ENCODE measurements at regions of chr14 and their contacts with region 1.

Region 1: DNA sequence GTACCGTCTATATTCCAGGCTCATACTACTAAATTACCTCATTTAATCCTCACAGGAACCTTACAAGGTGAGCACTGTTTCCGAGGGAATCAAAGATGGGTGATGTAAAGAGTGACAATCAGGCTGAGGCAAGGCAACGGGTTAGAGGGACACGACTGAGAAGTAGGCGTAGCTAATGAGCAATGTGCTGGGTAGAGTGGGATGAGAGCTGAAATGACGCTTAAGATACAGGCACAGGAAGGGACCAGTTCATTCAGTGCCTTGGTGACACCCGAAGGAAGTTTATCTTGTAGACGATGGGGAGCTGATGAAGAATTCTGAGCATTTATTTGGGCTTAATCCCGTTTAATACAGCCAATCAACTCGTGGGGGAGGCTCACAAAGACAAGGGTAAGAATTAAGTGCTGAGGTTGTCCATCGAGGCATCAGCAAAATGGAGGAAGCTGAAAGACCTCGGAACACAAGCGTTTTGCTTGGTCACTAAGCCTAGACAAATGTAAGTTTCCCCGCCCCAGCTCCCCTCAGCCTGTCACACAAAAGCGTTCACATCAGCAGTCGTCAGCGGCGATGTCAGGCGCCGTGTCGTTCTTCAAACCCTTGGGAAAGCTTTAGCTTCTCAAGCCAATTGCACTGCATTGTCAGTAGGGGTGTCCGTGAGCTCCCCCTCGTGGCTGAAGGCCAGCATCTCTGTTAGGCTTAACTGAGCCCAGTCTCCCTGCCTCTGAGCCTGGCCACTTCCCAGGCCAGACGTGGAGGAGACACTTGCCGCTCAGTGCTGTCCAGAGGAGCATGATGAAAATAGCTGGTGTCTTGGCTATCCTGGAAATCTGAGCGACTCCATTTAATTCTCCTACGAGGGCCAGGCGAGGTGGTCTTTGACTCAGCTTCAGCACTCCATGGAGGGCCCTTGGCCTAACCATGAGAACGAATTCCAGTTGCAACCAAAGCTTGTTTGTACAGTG is 288.5 kb upstream of the G2E3 start:
- DNase-seq: peak; percentile 82
- H3K4me3 ChIP-seq: peak overlapping the region in 1 of 3 experiments; percentile 41
- H3K27ac ChIP-seq: no peak overlapping the region
- H3K4me1 ChIP-seq: peaks cover 12% of the 10 kb centered on the region
- H3K27me3 ChIP-seq: peaks cover 5 to 18% of the 10 kb centered on the region in 2 experiments
- CTCF ChIP-seq: peak; percentile 94 to 95
- POLR2A ChIP-seq: no peak

Region 2: GRCh38 chr14:28756884-28757570 is 1513.5 kb before region 1 on chr14:
- CTCF ChIA-PET with region 1: interaction called, 16 read pairs
- POLR2A ChIA-PET with region 1: no interaction called
- dilution Hi-C with region 1: no loop called
- intact Hi-C with region 1: no loop called
- DNase-seq: peak; percentile 34
- H3K4me3 ChIP-seq: no peak overlapping the region
- H3K27ac ChIP-seq: no peak overlapping the region
- H3K4me1 ChIP-seq: peaks cover 3% of the 10 kb centered on the region
- H3K27me3 ChIP-seq: peaks cover 66 to 84% of the 10 kb centered on the region in 2 experiments
- CTCF ChIP-seq: peak; percentile 71 to 74
- POLR2A ChIP-seq: no peak

Region 3: DNA sequence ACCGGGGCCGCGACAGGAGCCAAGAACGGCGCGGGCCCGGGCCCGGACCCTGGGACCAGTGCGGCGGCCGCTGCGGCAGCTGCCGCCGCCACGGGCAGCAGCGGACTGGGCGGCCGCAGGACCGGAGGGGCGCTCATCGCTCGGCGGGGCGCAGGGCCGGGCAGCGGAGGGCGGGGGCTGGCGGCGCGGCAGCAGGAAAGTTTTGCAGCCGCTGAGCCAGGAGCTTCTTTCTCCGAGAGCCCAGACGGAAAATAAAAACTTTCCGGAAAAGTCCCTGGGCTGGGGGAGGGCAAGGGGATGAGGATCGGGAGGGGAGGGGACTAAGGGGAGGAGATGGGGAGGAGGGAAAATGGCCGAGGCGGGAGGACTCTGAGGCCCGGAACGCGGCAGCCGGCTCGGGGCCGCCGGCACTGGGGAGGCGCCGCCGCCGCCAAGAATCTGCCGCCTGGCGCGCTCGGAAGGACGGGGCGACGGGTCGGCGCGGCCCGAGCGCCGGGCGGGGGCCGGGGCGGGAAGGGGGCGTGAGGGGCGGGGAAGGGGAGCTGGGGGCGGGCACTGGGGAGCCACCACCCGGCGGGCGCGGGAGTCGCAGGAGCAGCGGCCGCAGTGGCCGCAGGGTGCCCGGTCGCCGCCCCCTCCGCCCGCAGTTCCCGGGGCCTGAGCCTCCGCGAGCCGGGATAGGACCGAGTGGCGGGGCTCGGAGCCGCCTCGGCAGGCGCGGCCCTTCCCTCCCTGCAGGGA is 342.9 kb before region 1 on chr14 and contains the start of gene PRKD1:
- CTCF ChIA-PET with region 1: interaction called, 8 read pairs
- POLR2A ChIA-PET with region 1: no interaction called
- dilution Hi-C with region 1: no loop called
- intact Hi-C with region 1: loop called (anchors 5 kb)
- DNase-seq: peak; percentile 62
- H3K4me3 ChIP-seq: peak within 1 kb of the TSS; percentile 56 to 73 (median 57)
- H3K27ac ChIP-seq: peak within 1 kb of the TSS; percentile 31
- H3K4me1 ChIP-seq: peaks cover 13% of the 10 kb centered on the region
- H3K27me3 ChIP-seq: peaks cover 0 to 2% of the 10 kb centered on the region in 2 experiments
- CTCF ChIP-seq: peak in 1 of 2 donors; percentile 22
- POLR2A ChIP-seq: no peak
- total RNA-seq, gene PRKD1: 10.3 and 10.9 TPM in 2 replicates

Region 4: GRCh38 chr14:29953519-29953918 is 317.0 kb before region 1 on chr14:
- CTCF ChIA-PET with region 1: no interaction called
- POLR2A ChIA-PET with region 1: no interaction called
- dilution Hi-C with region 1: no loop called
- intact Hi-C with region 1: no loop called
- DNase-seq: no peak
- H3K4me3 ChIP-seq: no peak overlapping the region
- H3K27ac ChIP-seq: no peak overlapping the region
- H3K4me1 ChIP-seq: no peaks in the 10 kb centered on the region
- H3K27me3 ChIP-seq: no peaks in the 10 kb centered on the region
- CTCF ChIP-seq: no peak
- POLR2A ChIP-seq: no peak

Region 5: DNA sequence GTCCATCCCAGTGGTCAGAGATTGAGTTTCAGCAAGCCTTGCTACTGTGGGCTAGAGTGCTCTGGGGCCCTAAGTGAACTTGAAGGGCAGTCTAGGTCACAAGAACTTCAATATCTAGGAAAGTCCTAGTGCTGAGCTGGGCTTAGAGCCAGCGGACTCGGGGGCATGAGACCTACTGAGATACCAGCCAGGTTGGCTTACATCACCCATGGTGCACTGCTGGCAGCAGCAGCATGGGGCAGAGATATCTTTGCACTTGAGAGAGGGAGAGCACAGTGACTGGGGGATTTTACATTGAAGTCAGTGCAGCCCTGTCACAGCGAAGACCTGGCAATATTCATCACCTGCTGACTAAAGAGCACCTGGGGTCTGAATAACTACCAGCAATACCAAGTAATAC is 184.5 kb before region 1 on chr14:
- CTCF ChIA-PET with region 1: no interaction called
- POLR2A ChIA-PET with region 1: no interaction called
- dilution Hi-C with region 1: no loop called
- intact Hi-C with region 1: no loop called
- DNase-seq: no peak
- H3K4me3 ChIP-seq: no peak overlapping the region
- H3K27ac ChIP-seq: no peak overlapping the region
- H3K4me1 ChIP-seq: no peaks in the 10 kb centered on the region
- H3K27me3 ChIP-seq: no peaks in the 10 kb centered on the region
- CTCF ChIP-seq: no peak
- POLR2A ChIP-seq: no peak

Region 6: GRCh38 chr14:30214461-30215090 is 55.9 kb before region 1 on chr14:
- CTCF ChIA-PET with region 1: interaction called, 90 read pairs
- POLR2A ChIA-PET with region 1: no interaction called
- dilution Hi-C with region 1: no loop called
- intact Hi-C with region 1: loop called (anchors 1 kb)
- DNase-seq: peak; percentile 65
- H3K4me3 ChIP-seq: no peak overlapping the region
- H3K27ac ChIP-seq: no peak overlapping the region
- H3K4me1 ChIP-seq: peaks cover 4% of the 10 kb centered on the region
- H3K27me3 ChIP-seq: no peaks in the 10 kb centered on the region
- CTCF ChIP-seq: peak; percentile 39 to 41
- POLR2A ChIP-seq: no peak

Region 7: GRCh38 chr14:30243805-30244204 is 26.7 kb before region 1 on chr14:
- CTCF ChIA-PET with region 1: interaction called, 13 read pairs
- POLR2A ChIA-PET with region 1: no interaction called
- dilution Hi-C with region 1: no loop called
- intact Hi-C with region 1: no loop called
- DNase-seq: no peak
- H3K4me3 ChIP-seq: no peak overlapping the region
- H3K27ac ChIP-seq: no peak overlapping the region
- H3K4me1 ChIP-seq: no peaks in the 10 kb centered on the region
- H3K27me3 ChIP-seq: no peaks in the 10 kb centered on the region
- CTCF ChIP-seq: no peak
- POLR2A ChIP-seq: no peak

Region 8: GRCh38 chr14:30283826-30284446 is 13.5 kb after region 1 on chr14:
- CTCF ChIA-PET with region 1: interaction called, 140 read pairs
- POLR2A ChIA-PET with region 1: no interaction called
- dilution Hi-C with region 1: no loop called
- intact Hi-C with region 1: no loop called
- DNase-seq: peak; percentile 60
- H3K4me3 ChIP-seq: no peak overlapping the region
- H3K27ac ChIP-seq: no peak overlapping the region
- H3K4me1 ChIP-seq: no peaks in the 10 kb centered on the region
- H3K27me3 ChIP-seq: no peaks in the 10 kb centered on the region
- CTCF ChIP-seq: peak; percentile 66 to 68
- POLR2A ChIP-seq: no peak

Measured in endothelial cell of umbilical vein (primary cell).